Mammary epithelial cell (primary cell): ENCODE measurements at regions of chr3 and their contacts with region 1.

Region 1: DNA sequence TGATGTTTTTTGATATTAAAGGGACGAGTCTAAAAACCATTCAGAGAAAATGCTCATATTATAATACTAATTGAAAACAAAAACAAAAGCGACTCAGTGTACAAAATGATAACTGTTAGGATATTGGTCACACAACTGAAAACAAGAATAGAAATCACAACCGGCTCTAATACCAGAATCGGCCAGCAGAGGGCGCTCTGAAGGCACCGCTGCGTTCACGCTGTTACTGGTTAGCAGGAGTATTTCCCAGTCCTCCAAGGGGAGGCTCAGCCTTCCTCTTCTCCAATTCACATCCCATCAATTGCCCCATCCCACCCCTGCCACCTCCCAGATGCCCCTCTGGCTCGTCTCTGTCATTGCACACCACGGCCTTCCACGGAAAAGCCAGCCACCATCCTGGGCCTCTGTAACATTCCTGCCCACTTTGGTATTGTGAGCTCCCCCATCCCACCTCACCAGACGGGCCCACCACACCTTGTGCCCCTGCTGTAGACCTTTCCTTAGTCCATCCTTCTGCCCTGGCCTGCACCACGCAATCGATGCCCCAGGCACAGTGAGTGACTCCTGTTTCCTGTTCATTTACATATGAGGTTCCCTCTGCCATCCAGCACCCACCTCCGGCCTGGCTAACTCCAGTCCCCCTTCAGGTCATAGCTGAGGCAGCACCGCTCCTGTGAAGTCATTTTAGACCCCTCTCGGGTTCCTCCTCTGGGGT is 8.5 kb downstream of the FAM107A start:
- DNase-seq: peak; percentile 45
- H3K4me3 ChIP-seq: no peak overlapping the region
- H3K27ac ChIP-seq: no peak overlapping the region
- H3K4me1 ChIP-seq: peaks cover 21% of the 10 kb centered on the region
- H3K27me3 ChIP-seq: no peaks in the 10 kb centered on the region
- CTCF ChIP-seq: peak; percentile 87 to 88

Region 2: GRCh38 chr3:58556761-58557221 is 11.9 kb before region 1 on chr3:
- CTCF ChIA-PET with region 1: no interaction called
- dilution Hi-C with region 1: no loop called
- in situ Hi-C with region 1: no loop called
- intact Hi-C with region 1: no loop called
- DNase-seq: no peak
- H3K4me3 ChIP-seq: no peak overlapping the region
- H3K27ac ChIP-seq: no peak overlapping the region
- H3K4me1 ChIP-seq: no peaks in the 10 kb centered on the region
- H3K27me3 ChIP-seq: no peaks in the 10 kb centered on the region
- CTCF ChIP-seq: no peak

Region 3: GRCh38 chr3:58617338-58617761 is 48.6 kb after region 1 on chr3:
- CTCF ChIA-PET with region 1: no interaction called
- dilution Hi-C with region 1: loop called (anchors 5 kb)
- in situ Hi-C with region 1: loop called in 1 of 2 experiments (anchors 5 kb)
- intact Hi-C with region 1: no loop called
- DNase-seq: no peak
- H3K4me3 ChIP-seq: no peak overlapping the region
- H3K27ac ChIP-seq: no peak overlapping the region
- H3K4me1 ChIP-seq: no peaks in the 10 kb centered on the region
- H3K27me3 ChIP-seq: no peaks in the 10 kb centered on the region
- CTCF ChIP-seq: no peak